ENCODE measurements at regions of chr15 and their contacts with region 1.

Region 1: GRCh38 chr15:61195116-61196002 is 33.7 kb downstream of the RORA start:
- DNase-seq: peak; percentile 64
- H3K4me3 Mint-ChIP-seq: no peak overlapping the region
- H3K27ac Mint-ChIP-seq: no peak overlapping the region
- H3K4me1 Mint-ChIP-seq: no peaks in the 10 kb centered on the region
- H3K27me3 Mint-ChIP-seq: no peaks in the 10 kb centered on the region
- CTCF ChIP-seq: peak; percentile 64

Region 2: GRCh38 chr15:60766391-60767128 is 428.8 kb before region 1 on chr15:
- CTCF ChIA-PET with region 1: no interaction called
- POLR2A ChIA-PET with region 1: no interaction called
- intact Hi-C with region 1: no loop called
- DNase-seq: no peak
- H3K4me3 Mint-ChIP-seq: no peak overlapping the region
- H3K27ac Mint-ChIP-seq: no peak overlapping the region
- H3K4me1 Mint-ChIP-seq: peaks cover 4% of the 10 kb centered on the region
- H3K27me3 Mint-ChIP-seq: peaks cover 44% of the 10 kb centered on the region
- CTCF ChIP-seq: no peak

Region 3: DNA sequence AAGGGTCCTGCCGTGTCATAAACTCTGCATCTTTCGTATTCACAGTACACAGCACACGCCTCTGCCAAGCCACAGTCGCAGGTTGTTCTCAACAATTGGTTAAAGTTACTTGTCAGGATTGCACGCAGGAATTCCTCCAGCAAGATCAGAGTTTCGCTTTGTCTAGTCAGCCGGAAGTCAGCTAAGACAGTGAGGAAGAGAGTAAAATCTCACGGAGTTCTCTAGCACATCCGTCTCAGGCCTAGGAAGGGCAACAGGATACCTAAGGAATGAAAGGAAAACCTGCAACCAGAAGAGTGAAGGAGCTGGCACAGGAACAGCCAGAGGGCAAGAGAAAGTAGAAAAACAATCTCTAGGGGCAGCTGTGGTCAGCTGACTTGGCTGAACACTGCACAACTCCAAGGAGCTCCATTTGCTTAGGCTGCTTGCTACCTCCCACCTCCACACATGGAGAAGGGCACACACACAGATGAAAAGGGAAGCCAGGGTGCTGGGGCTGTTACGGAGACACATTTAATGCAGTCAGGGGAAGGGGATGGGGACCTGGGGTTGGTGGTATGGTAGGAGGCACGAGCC is 10.1 kb after region 1 on chr15:
- CTCF ChIA-PET with region 1: interaction called, 22 read pairs
- POLR2A ChIA-PET with region 1: no interaction called
- intact Hi-C with region 1: no loop called
- DNase-seq: peak; percentile 5
- H3K4me3 Mint-ChIP-seq: no peak overlapping the region
- H3K27ac Mint-ChIP-seq: no peak overlapping the region
- H3K4me1 Mint-ChIP-seq: no peaks in the 10 kb centered on the region
- H3K27me3 Mint-ChIP-seq: no peaks in the 10 kb centered on the region
- CTCF ChIP-seq: no peak

Region 4: GRCh38 chr15:61621146-61621545 is 425.8 kb after region 1 on chr15:
- CTCF ChIA-PET with region 1: interaction called, 21 read pairs
- POLR2A ChIA-PET with region 1: no interaction called
- intact Hi-C with region 1: loop called (anchors 1 kb)
- DNase-seq: peak; percentile 49
- H3K4me3 Mint-ChIP-seq: no peak overlapping the region
- H3K27ac Mint-ChIP-seq: no peak overlapping the region
- H3K4me1 Mint-ChIP-seq: no peaks in the 10 kb centered on the region
- H3K27me3 Mint-ChIP-seq: no peaks in the 10 kb centered on the region
- CTCF ChIP-seq: peak; percentile 53

Measured in MCF 10A (cell line).